ENCODE measurements at regions of chr11 and their contacts with region 1.

Region 1: GRCh38 chr11:101456812-101457211 is 127.0 kb downstream of the TRPC6 start:
- DNase-seq: no peak
- ATAC-seq: no peak

Region 2: GRCh38 chr11:101848262-101848661 is 391.4 kb after region 1 on chr11:
- intact Hi-C with region 1: loop called (anchors 5 kb)
- DNase-seq: no peak
- ATAC-seq: no peak

Region 3: GRCh38 chr11:101880222-101880621 is 423.4 kb after region 1 on chr11:
- intact Hi-C with region 1: no loop called
- DNase-seq: no peak
- ATAC-seq: no peak